Gastrocnemius medialis (tissue), 4 donors: ENCODE measurements at regions of chr11 and their contacts with region 1.

Region 1: GRCh38 chr11:47932544-47932943 is 47.8 kb upstream of the PTPRJ start:
- DNase-seq: no peak
- ATAC-seq: no peak
- H3K4me3 ChIP-seq: no peak overlapping the region
- H3K27ac ChIP-seq: no peak overlapping the region
- H3K4me1 ChIP-seq: peaks cover 0 to 6% of the 10 kb centered on the region in 2 donors
- H3K27me3 ChIP-seq: no peaks in the 10 kb centered on the region
- CTCF ChIP-seq: no peak
- POLR2A ChIP-seq: no peak

Region 2: GRCh38 chr11:47552566-47553416 is 379.8 kb before region 1 on chr11 and contains the start of gene CELF1:
- in situ Hi-C with region 1: no loop called
- intact Hi-C with region 1: no loop called
- DNase-seq: peak; percentile 84 to 90
- ATAC-seq: peak; percentile 74 to 78
- H3K4me3 ChIP-seq: peak within 1 kb of the TSS; percentile 91 to 95 (median 92)
- H3K27ac ChIP-seq: peak within 1 kb of the TSS; percentile 96 to 99 (median 97)
- H3K4me1 ChIP-seq: peaks cover 45 to 62% of the 10 kb centered on the region in 2 donors
- H3K27me3 ChIP-seq: no peaks in the 10 kb centered on the region
- CTCF ChIP-seq: peak; percentile 78 to 96 (median 94)
- POLR2A ChIP-seq: peak; percentile 88 to 92
- total RNA-seq, gene CELF1: 106 to 185 (median 136) TPM

Region 3: DNA sequence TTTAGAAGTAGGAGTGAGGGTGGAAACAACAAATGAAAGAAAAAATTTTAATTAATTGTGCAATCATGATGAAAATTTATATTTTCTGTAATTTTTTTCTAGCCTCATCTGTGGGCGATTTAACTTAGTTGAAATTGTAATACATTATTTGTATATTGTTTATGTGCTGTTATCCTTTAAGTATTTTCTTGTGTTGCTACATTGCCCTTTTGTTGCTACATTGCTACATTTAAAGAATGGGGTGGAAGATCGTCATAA is 177.9 kb after region 1 on chr11:
- in situ Hi-C with region 1: loop called (anchors 5 to 10 kb)
- intact Hi-C with region 1: loop called (anchors 1 kb)
- DNase-seq: no peak
- ATAC-seq: no peak
- H3K4me3 ChIP-seq: no peak overlapping the region
- H3K27ac ChIP-seq: no peak overlapping the region
- H3K4me1 ChIP-seq: peaks cover 11% of the 10 kb centered on the region in 2 donors
- H3K27me3 ChIP-seq: no peaks in the 10 kb centered on the region
- CTCF ChIP-seq: no peak
- POLR2A ChIP-seq: no peak

Region 4: GRCh38 chr11:48116437-48117228 is 184.1 kb after region 1 on chr11:
- in situ Hi-C with region 1: loop called (anchors 5 to 10 kb)
- intact Hi-C with region 1: no loop called
- DNase-seq: no peak
- ATAC-seq: no peak
- H3K4me3 ChIP-seq: no peak overlapping the region
- H3K27ac ChIP-seq: no peak overlapping the region
- H3K4me1 ChIP-seq: no peaks in the 10 kb centered on the region
- H3K27me3 ChIP-seq: no peaks in the 10 kb centered on the region
- CTCF ChIP-seq: no peak
- POLR2A ChIP-seq: no peak

Region 5: GRCh38 chr11:48172818-48173609 is 240.5 kb after region 1 on chr11:
- in situ Hi-C with region 1: no loop called
- intact Hi-C with region 1: no loop called
- DNase-seq: peak; percentile 26 to 29
- ATAC-seq: peak; percentile 60 to 78
- H3K4me3 ChIP-seq: peak overlapping the region in 1 of 4 donors; percentile 31
- H3K27ac ChIP-seq: no peak overlapping the region
- H3K4me1 ChIP-seq: peaks cover 0 to 4% of the 10 kb centered on the region in 2 donors
- H3K27me3 ChIP-seq: no peaks in the 10 kb centered on the region
- CTCF ChIP-seq: peak; percentile 57 to 84 (median 74)
- POLR2A ChIP-seq: no peak